ENCODE measurements at regions of chr5 and their contacts with region 1.

Region 1: DNA sequence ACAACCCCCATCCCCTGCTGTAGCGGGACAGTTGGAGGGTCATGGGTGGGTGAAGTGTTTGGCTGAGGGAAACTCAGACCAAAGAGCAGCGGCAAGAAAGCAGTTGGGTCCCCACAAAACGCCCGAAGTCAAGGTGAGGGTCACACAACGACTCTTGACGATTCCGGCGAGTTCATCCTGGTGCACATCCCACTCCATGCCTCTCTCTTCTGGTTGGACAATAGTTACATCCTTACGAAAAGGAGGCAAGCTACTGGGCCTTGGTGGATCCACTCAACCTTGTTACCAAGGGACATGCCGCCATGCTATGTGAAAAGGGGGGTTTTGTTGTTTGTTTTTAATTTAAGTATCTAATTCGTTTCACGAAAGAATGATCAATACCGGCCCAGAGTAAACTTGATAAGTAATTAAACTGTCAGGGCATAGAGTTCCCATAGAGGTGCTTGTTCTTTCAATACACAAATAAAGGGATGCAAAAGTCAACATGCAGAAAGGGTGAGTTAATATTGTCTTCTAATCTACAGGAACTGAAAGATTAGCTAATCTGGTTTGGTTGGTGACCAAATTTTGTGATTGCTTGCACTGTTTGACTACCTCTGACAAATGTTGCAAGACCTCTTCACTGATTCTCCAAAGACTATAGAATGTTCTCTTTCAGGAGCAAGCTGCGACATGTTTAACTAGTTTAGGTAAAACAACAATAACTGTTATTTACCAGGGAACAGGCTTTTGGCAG is 732 bp upstream of the SMIM15 start:
- DNase-seq: peak; percentile 76
- H3K27ac ChIP-seq: peak overlapping the region; percentile 95
- CTCF ChIP-seq: no peak

Region 2: GRCh38 chr5:61331407-61332357 is 168.7 kb after region 1 on chr5 and contains the start of gene ZSWIM6:
- CTCF ChIA-PET with region 1: interaction called, 14 read pairs
- POLR2A ChIA-PET with region 1: interaction called, 4 read pairs
- DNase-seq: peak; percentile 98
- H3K27ac ChIP-seq: peak within 1 kb of the TSS; percentile 96
- CTCF ChIP-seq: no peak

Measured in RWPE1 (cell line).